Activated CD4-positive, alpha-beta memory T cell treated with anti-CD3 and anti-CD28 coated beads for 36 hours (primary cell): ENCODE measurements at regions of chr10 and their contacts with region 1.

Region 1: DNA sequence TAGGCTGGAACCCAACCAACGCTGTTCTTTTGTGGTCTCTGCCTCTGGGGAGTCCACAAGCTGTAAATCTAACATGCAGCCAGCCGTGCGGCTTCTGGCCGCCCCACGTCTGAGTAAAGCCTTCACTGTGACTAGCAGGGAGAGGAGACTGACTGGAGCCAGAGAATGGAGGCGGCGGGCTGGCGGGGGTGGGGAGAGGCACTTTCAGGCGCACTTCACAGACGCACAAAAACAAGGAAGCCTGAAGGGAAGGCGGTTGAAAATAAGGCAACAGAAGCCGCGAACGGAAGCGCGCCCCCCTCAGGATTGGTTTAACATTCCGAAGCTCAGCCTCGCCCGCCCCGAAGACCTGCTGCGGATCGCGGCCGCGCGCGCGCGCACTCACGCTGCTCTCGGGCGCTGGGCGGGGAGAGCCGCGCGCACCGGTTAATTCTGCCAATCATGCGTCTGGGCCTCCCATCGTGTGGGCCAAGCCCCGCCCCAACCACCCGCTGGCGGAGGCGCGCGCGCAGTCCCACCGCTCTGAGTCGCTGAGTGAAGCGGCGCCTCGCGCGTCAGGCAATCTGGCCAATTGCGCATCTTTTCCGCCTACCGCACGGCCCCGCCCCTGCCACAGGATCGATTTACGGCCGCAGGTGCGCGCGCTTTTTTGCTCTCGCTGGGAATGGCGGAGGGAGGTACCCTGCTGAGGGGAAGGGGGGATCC is at the start of gene SFR1:
- DNase-seq: peak; percentile 100
- H3K4me3 Mint-ChIP-seq: peak within 1 kb of the TSS; percentile 90
- H3K27ac Mint-ChIP-seq: peak within 1 kb of the TSS; percentile 97
- H3K4me1 Mint-ChIP-seq: peaks cover 33% of the 10 kb centered on the region
- H3K27me3 Mint-ChIP-seq: no peaks in the 10 kb centered on the region
- total RNA-seq, gene SFR1: 16.8 to 19.2 TPM

Region 2: GRCh38 chr10:103888113-103888841 is 233.4 kb before region 1 on chr10:
- CTCF ChIA-PET with region 1: interaction called, 68 read pairs
- POLR2A ChIA-PET with region 1: interaction called, 9 read pairs
- intact Hi-C with region 1: loop called (anchors 1 kb)
- DNase-seq: peak; percentile 33
- H3K4me3 Mint-ChIP-seq: no peak overlapping the region
- H3K27ac Mint-ChIP-seq: peak overlapping the region; percentile 80
- H3K4me1 Mint-ChIP-seq: peaks cover 46% of the 10 kb centered on the region
- H3K27me3 Mint-ChIP-seq: no peaks in the 10 kb centered on the region

Region 3: DNA sequence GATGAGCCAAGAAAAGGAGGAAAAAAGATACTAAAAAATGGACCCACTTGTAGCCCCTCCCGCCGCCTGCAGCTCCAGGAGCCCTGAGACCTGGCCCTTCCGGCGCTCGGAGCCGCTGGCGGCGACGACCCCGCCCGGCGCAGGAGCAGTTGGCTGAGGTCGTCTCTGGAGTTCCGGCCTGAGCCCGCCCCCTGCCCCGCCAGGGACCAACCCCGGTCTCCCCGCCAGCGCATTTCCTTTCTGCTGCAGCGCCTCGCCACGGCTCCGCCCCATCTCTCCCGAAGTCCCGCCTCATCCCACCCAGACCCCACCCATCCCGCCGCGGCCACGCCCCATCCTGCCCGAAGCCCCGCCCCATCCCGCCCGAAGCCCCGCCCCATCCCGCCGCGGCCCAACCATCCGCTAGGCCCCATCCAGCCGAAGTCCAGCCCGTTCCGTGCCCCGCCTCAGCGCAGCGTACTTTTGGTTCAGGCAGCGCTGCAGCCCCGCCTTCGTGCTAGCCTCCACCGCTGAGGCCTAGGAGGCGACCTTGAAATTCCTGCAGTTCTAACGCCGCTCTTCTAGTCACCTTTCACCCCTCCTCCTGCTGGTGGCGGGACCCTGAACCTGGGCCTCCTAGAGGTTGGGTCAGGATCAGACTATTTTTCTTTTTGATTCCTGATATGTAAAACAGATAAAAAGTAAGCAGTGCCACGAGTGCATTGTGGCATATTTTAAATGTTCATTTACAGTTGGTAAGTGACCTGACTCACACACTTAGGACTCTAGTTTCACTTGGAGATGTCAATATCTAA is 203.4 kb before region 1 on chr10 and contains the start of gene STN1:
- CTCF ChIA-PET with region 1: interaction called, 7 read pairs
- POLR2A ChIA-PET with region 1: interaction called, 8 read pairs
- intact Hi-C with region 1: loop called (anchors 2 kb)
- DNase-seq: peak; percentile 98
- H3K4me3 Mint-ChIP-seq: peak within 1 kb of the TSS; percentile 98
- H3K27ac Mint-ChIP-seq: peak within 1 kb of the TSS; percentile 98
- H3K4me1 Mint-ChIP-seq: peaks cover 29% of the 10 kb centered on the region
- H3K27me3 Mint-ChIP-seq: no peaks in the 10 kb centered on the region
- total RNA-seq, gene STN1: 56.1 to 57.0 TPM

Region 4: GRCh38 chr10:103983367-103983911 is 138.2 kb before region 1 on chr10:
- CTCF ChIA-PET with region 1: interaction called, 4 read pairs
- POLR2A ChIA-PET with region 1: interaction called, 9 read pairs
- intact Hi-C with region 1: loop called (anchors 5 kb)
- DNase-seq: peak; percentile 13
- H3K4me3 Mint-ChIP-seq: peak overlapping the region; percentile 56
- H3K27ac Mint-ChIP-seq: peak overlapping the region; percentile 80
- H3K4me1 Mint-ChIP-seq: peaks cover 74% of the 10 kb centered on the region
- H3K27me3 Mint-ChIP-seq: no peaks in the 10 kb centered on the region

Region 5: GRCh38 chr10:104109908-104110662 is 11.6 kb before region 1 on chr10:
- CTCF ChIA-PET with region 1: interaction called, 10 read pairs
- POLR2A ChIA-PET with region 1: interaction called, 7 read pairs
- intact Hi-C with region 1: loop called (anchors 1 kb)
- DNase-seq: no peak
- H3K4me3 Mint-ChIP-seq: no peak overlapping the region
- H3K27ac Mint-ChIP-seq: no peak overlapping the region
- H3K4me1 Mint-ChIP-seq: peaks cover 9% of the 10 kb centered on the region
- H3K27me3 Mint-ChIP-seq: peaks cover 8% of the 10 kb centered on the region

Region 6: GRCh38 chr10:104268716-104269645 is 147.3 kb after region 1 on chr10 and contains the start of gene GSTO2:
- CTCF ChIA-PET with region 1: interaction called, 4 read pairs
- POLR2A ChIA-PET with region 1: interaction called, 20 read pairs
- intact Hi-C with region 1: loop called (anchors 1 kb)
- DNase-seq: peak; percentile 99
- H3K4me3 Mint-ChIP-seq: peak within 1 kb of the TSS; percentile 78
- H3K27ac Mint-ChIP-seq: peak within 1 kb of the TSS; percentile 95
- H3K4me1 Mint-ChIP-seq: peaks cover 39% of the 10 kb centered on the region
- H3K27me3 Mint-ChIP-seq: peaks cover under 1% of the 10 kb centered on the region
- total RNA-seq, gene GSTO2: 2.3 to 2.6 TPM

Region 7: GRCh38 chr10:104353325-104354048 is 231.8 kb after region 1 on chr10 and contains the start of gene CFAP58:
- CTCF ChIA-PET with region 1: interaction called, 6 read pairs
- POLR2A ChIA-PET with region 1: no interaction called
- intact Hi-C with region 1: loop called (anchors 1 kb)
- DNase-seq: peak; percentile 94
- H3K4me3 Mint-ChIP-seq: peak within 1 kb of the TSS; percentile 10
- H3K27ac Mint-ChIP-seq: peak within 1 kb of the TSS; percentile 29
- H3K4me1 Mint-ChIP-seq: no peaks in the 10 kb centered on the region
- H3K27me3 Mint-ChIP-seq: no peaks in the 10 kb centered on the region
- total RNA-seq, gene CFAP58: 0.31 to 0.88 TPM